ENCODE measurements at regions of chr1 and their contacts with region 1.

Region 1: GRCh38 chr1:85230305-85230980 is 29.0 kb downstream of the C1orf52 start:
- DNase-seq: no peak
- H3K4me3 ChIP-seq: no peak overlapping the region
- H3K27ac ChIP-seq: no peak overlapping the region
- H3K4me1 ChIP-seq: no peaks in the 10 kb centered on the region
- H3K27me3 ChIP-seq: no peaks in the 10 kb centered on the region
- CTCF ChIP-seq: no peak
- POLR2A ChIP-seq: no peak

Region 2: DNA sequence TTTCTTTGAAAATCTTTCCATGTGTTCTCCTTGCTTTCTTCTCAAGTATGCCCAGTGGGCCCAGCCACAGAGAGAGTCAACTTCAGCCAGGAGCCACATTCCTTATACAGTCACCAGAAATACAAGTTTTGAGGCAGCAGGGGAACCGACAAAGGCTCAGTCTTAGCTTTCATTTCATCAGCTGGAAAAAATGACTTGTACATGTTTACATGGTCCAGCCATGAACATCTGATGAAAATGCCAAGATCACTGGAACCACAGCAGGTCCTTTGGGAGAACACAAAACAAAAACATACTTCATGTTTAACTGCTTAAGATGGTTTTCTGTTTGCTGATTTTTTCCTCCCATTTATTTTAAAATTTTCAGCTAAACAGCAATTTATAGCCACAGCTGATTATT is 102.1 kb before region 1 on chr1:
- intact Hi-C with region 1: loop called in 1 of 2 experiments (anchors 10 kb)
- DNase-seq: no peak
- H3K4me3 ChIP-seq: no peak overlapping the region
- H3K27ac ChIP-seq: no peak overlapping the region
- H3K4me1 ChIP-seq: no peaks in the 10 kb centered on the region
- H3K27me3 ChIP-seq: no peaks in the 10 kb centered on the region
- CTCF ChIP-seq: no peak
- POLR2A ChIP-seq: no peak

Measured in adrenal gland (tissue), 19 donors.